ENCODE measurements at regions of chr5 and their contacts with region 1.

Region 1: DNA sequence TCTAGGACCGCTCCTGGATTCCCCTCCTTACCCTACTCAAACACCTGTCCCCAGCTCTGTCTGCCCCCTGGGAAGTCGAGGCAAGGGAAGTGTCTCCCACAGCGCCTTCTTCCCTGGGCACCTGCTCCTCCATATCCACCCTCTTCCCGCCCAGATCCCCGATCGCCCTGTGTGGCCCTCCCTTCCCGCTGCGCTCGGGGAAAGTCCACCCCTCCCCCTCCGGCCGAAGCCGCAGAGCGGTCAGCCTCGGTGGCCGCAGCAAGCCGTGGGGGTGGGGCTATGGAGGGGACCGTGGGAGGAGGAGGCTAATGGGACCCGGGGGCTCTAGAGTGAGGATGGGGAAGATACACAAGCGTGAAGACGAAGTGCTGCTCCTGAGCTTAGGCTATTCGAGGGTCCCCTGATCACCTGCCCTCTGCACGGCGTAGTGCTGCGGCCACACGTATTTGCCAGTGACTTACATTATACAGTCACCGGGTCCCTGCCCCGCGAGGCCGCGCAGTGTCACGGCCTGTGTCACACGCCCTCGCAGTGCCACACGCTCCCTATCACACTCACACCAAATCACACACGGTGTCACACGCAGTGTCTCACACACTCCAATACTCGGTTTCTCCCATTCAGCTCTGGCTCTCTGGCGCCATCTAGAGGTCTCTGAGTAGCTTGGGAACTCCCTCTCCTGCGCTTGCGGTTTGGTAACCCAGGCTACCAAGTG is 658 bp upstream of the PCDH1 start:
- ATAC-seq: peak; percentile 58 to 78 (median 60)
- H3K4me3 ChIP-seq: peak overlapping the region; percentile 59 to 98 (median 89)
- H3K27ac ChIP-seq: peak overlapping the region; percentile 87 to 96
- H3K4me1 ChIP-seq: peaks cover 46 to 55% of the 10 kb centered on the region in 2 donors

Region 2: GRCh38 chr5:141701360-141702119 is 177.3 kb before region 1 on chr5:
- in situ Hi-C with region 1: loop called in 3 of 9 experiments (anchors 10 to 25 kb)
- ATAC-seq: peak in 4 of 8 experiments; percentile 2 to 32 (median 4)
- H3K4me3 ChIP-seq: peak overlapping the region in 4 of 5 donors; percentile 25 to 41 (median 32)
- H3K27ac ChIP-seq: no peak overlapping the region
- H3K4me1 ChIP-seq: peaks cover 12 to 26% of the 10 kb centered on the region in 2 donors

Region 3: GRCh38 chr5:141951332-141951781 is 72.5 kb after region 1 on chr5:
- in situ Hi-C with region 1: loop called in 1 of 9 experiments (anchors 10 kb)
- ATAC-seq: peak in 6 of 8 experiments; percentile 36 to 70 (median 51)
- H3K4me3 ChIP-seq: no peak overlapping the region
- H3K27ac ChIP-seq: no peak overlapping the region
- H3K4me1 ChIP-seq: peaks cover 0 to 2% of the 10 kb centered on the region in 2 donors